CD8-positive, alpha-beta T cell (primary cell): ENCODE measurements at regions of chr9 and their contacts with region 1.

Region 1: DNA sequence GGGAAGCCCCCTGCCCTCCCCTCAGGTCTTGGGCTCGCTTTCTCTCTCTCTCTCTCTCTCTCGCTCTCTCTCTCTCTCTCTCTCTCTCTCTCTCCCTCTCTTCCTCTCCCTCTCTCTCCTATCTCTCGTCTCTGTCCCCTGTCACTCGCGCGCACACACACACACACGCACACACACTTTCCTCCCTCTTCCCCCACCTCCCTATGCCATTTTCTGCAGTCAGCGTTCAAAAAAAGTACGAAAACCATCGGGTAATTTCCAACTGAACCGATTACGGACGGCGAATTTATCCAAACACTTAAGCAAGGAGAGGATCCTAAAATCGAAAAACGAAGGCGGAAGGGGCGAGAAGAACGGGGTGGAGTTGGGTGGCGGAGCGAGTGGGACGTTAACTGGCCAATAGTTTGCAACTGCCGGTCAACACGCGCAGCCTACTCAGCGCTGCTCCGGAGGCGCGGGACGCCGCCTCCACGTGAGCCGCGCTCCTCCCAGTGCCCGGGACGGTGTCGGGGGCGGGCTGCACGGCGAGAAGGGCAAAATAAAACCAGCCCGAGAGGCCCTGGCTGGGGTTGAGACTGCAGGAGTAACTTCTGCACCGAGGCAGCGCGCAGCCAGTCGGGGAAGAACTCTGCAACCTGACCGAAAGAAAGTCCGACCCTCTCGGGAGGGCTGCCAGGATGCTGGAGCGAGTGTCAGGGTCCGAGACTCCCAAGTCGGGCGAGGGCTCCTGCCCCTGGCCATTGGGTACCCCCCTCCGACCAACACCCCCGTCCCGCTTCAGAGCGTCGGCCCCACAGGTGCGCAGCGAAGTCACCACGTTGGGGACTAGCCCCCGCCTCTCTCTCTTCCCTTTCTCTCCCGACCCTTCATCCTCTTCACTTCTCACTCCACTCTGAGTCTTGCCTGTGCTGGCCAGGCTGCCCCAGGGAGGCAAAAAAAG is 24.9 kb upstream of the ELAVL2 start:
- DNase-seq: no peak
- ATAC-seq: no peak
- H3K4me3 ChIP-seq: no peak overlapping the region
- H3K4me3 Mint-ChIP-seq: no peak overlapping the region
- H3K27ac ChIP-seq: no peak overlapping the region
- H3K27ac Mint-ChIP-seq: no peak overlapping the region
- H3K4me1 ChIP-seq: no peaks in the 10 kb centered on the region
- H3K4me1 Mint-ChIP-seq: peaks cover 4% of the 10 kb centered on the region
- H3K27me3 ChIP-seq: peaks cover 0 to 5% of the 10 kb centered on the region in 2 experiments
- H3K27me3 Mint-ChIP-seq: peaks cover 18% of the 10 kb centered on the region
- CTCF ChIP-seq: no peak

Region 2: GRCh38 chr9:23747088-23748075 is 103.6 kb before region 1 on chr9:
- CTCF ChIA-PET with region 1: no interaction called
- POLR2A ChIA-PET with region 1: no interaction called
- intact Hi-C with region 1: no loop called
- DNase-seq: no peak
- ATAC-seq: no peak
- H3K4me3 ChIP-seq: no peak overlapping the region
- H3K4me3 Mint-ChIP-seq: no peak overlapping the region
- H3K27ac ChIP-seq: no peak overlapping the region
- H3K27ac Mint-ChIP-seq: no peak overlapping the region
- H3K4me1 ChIP-seq: no peaks in the 10 kb centered on the region
- H3K4me1 Mint-ChIP-seq: no peaks in the 10 kb centered on the region
- H3K27me3 ChIP-seq: no peaks in the 10 kb centered on the region
- H3K27me3 Mint-ChIP-seq: no peaks in the 10 kb centered on the region
- CTCF ChIP-seq: no peak

Region 3: DNA sequence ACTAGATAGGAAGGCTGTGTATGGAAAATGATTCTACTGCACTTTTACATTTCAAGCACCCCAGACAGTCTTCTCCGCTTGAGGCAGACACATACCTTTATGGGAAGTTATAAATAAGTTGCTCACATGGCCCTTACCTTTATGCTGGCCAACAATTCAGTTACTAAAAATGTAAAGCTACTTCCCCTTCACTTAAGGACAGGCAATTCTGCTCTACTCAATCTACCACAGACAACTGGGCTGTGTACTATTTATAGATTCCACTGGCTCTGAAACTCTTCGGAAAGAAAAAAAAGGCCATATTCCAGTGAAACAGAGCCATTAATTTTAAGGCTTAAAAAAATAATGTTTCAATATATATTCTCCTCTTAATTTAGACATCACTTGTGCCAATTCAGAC is 84.3 kb before region 1 on chr9:
- CTCF ChIA-PET with region 1: no interaction called
- POLR2A ChIA-PET with region 1: no interaction called
- intact Hi-C with region 1: no loop called
- DNase-seq: no peak
- ATAC-seq: no peak
- H3K4me3 ChIP-seq: no peak overlapping the region
- H3K4me3 Mint-ChIP-seq: no peak overlapping the region
- H3K27ac ChIP-seq: no peak overlapping the region
- H3K27ac Mint-ChIP-seq: no peak overlapping the region
- H3K4me1 ChIP-seq: no peaks in the 10 kb centered on the region
- H3K4me1 Mint-ChIP-seq: no peaks in the 10 kb centered on the region
- H3K27me3 ChIP-seq: no peaks in the 10 kb centered on the region
- H3K27me3 Mint-ChIP-seq: no peaks in the 10 kb centered on the region
- CTCF ChIP-seq: no peak

Region 4: DNA sequence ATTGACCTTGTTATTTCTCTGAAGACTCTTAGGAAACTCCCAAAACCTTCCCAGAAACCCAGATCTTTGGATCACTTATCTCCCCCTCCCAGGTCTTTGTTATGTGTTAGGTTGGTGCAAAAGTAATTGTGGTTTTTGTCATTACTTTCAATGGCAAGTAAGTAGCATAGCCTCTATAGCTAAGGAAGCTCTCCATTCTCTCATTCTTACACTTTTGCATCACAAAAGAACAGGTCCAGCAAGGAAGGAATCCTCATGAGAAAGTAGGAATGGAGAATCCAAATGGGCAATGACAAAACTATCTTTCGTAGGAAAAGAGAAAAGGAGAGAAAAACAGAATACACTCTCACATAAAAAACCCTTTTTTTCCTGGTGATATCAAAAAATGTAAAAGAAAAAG is 56.4 kb after region 1 on chr9:
- CTCF ChIA-PET with region 1: no interaction called
- POLR2A ChIA-PET with region 1: no interaction called
- intact Hi-C with region 1: loop called in 1 of 2 experiments (anchors 5 kb)
- DNase-seq: no peak
- ATAC-seq: no peak
- H3K4me3 ChIP-seq: no peak overlapping the region
- H3K4me3 Mint-ChIP-seq: no peak overlapping the region
- H3K27ac ChIP-seq: no peak overlapping the region
- H3K27ac Mint-ChIP-seq: no peak overlapping the region
- H3K4me1 ChIP-seq: no peaks in the 10 kb centered on the region
- H3K4me1 Mint-ChIP-seq: no peaks in the 10 kb centered on the region
- H3K27me3 ChIP-seq: no peaks in the 10 kb centered on the region
- H3K27me3 Mint-ChIP-seq: no peaks in the 10 kb centered on the region
- CTCF ChIP-seq: no peak

Region 5: GRCh38 chr9:23934291-23934906 is 83.4 kb after region 1 on chr9:
- CTCF ChIA-PET with region 1: no interaction called
- POLR2A ChIA-PET with region 1: no interaction called
- intact Hi-C with region 1: no loop called
- DNase-seq: no peak
- ATAC-seq: no peak
- H3K4me3 ChIP-seq: no peak overlapping the region
- H3K4me3 Mint-ChIP-seq: no peak overlapping the region
- H3K27ac ChIP-seq: no peak overlapping the region
- H3K27ac Mint-ChIP-seq: no peak overlapping the region
- H3K4me1 ChIP-seq: no peaks in the 10 kb centered on the region
- H3K4me1 Mint-ChIP-seq: no peaks in the 10 kb centered on the region
- H3K27me3 ChIP-seq: no peaks in the 10 kb centered on the region
- H3K27me3 Mint-ChIP-seq: no peaks in the 10 kb centered on the region
- CTCF ChIP-seq: no peak

Region 6: GRCh38 chr9:25472140-25472539 is 1621.2 kb after region 1 on chr9:
- CTCF ChIA-PET with region 1: no interaction called
- POLR2A ChIA-PET with region 1: no interaction called
- intact Hi-C with region 1: loop called in 1 of 2 experiments (anchors 10 kb)
- DNase-seq: no peak
- ATAC-seq: no peak
- H3K4me3 ChIP-seq: no peak overlapping the region
- H3K4me3 Mint-ChIP-seq: no peak overlapping the region
- H3K27ac ChIP-seq: no peak overlapping the region
- H3K27ac Mint-ChIP-seq: no peak overlapping the region
- H3K4me1 ChIP-seq: no peaks in the 10 kb centered on the region
- H3K4me1 Mint-ChIP-seq: no peaks in the 10 kb centered on the region
- H3K27me3 ChIP-seq: no peaks in the 10 kb centered on the region
- H3K27me3 Mint-ChIP-seq: no peaks in the 10 kb centered on the region
- CTCF ChIP-seq: no peak